MCF 10A (cell line): ENCODE measurements at regions of chr11 and their contacts with region 1.

Region 1: DNA sequence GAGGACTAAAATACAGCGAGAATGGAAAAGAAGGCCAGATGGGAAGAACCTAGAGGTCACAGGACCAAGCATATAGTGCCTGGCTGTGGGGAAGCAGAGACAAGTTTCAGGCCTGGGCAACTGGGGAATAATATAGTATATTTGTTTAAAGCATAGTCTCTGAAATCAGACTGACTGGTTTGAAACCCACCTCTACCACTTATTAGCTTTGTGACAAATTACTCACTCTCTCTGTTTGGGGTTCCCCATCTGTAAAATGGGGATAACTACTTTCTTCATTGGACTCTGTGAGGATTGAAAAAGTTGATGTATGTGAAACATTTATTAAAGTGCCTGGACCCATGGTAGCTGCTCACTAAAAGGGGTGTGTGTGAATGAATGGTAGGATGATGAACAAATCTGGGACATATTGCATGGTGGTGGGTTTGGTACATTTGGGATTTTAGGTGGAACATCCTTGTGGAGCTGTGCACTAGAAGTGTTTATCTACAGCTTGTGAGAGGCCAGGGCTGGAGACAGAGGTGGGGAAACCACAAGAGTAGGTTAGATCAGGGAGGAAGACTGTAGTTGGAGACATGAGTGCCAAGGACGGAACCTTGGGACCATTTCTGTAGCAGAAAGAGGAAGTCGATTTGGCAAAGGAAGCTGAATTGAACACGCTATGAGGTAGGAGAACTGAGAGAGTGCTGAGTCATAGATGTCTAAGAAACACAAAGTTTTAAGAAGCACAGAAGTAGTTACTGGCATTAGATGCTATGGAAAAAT is 52.6 kb downstream of the SWAP70 start:
- DNase-seq: peak; percentile 63
- H3K4me3 Mint-ChIP-seq: no peak overlapping the region
- H3K27ac Mint-ChIP-seq: peak overlapping the region; percentile 26
- H3K4me1 Mint-ChIP-seq: peaks cover 16% of the 10 kb centered on the region
- H3K27me3 Mint-ChIP-seq: no peaks in the 10 kb centered on the region
- CTCF ChIP-seq: no peak

Region 2: GRCh38 chr11:9651899-9652748 is 64.3 kb before region 1 on chr11:
- CTCF ChIA-PET with region 1: no interaction called
- POLR2A ChIA-PET with region 1: no interaction called
- intact Hi-C with region 1: no loop called
- DNase-seq: no peak
- H3K4me3 Mint-ChIP-seq: no peak overlapping the region
- H3K27ac Mint-ChIP-seq: peak overlapping the region; percentile 31
- H3K4me1 Mint-ChIP-seq: peaks cover 5% of the 10 kb centered on the region
- H3K27me3 Mint-ChIP-seq: no peaks in the 10 kb centered on the region
- CTCF ChIP-seq: no peak

Region 3: DNA sequence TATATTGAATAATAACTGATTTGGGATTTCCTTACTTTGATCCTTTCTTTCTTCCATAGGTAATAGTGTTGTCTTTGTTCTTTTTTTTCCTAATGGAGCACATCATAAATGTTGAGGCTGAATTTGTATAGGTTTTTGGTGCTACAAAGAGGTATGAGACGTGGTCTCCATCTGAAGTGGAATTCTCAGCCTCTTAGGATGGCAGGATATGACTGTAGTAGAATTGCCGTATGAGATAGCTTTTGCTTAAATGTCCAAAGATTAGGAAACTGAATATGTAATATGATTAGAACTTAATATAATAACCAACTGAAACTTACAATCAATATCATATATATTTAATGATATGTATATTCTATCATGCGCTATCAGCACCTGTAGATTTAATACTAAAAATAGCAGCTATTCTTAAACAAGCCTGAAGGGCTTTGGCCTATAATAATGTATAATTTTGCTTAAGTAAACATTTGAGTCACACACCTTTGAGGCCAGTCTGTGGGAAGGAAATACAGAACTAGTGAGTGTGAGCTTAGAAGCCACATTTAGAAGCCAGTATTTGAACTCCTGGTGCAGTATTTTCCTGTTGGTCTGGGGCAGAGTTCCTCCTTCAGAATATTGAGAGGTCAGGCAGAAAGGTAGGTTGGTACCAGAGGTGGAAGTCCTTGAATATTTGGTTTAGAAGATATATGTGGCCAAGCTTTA is 10.0 kb after region 1 on chr11:
- CTCF ChIA-PET with region 1: no interaction called
- POLR2A ChIA-PET with region 1: interaction called, 11 read pairs
- intact Hi-C with region 1: no loop called
- DNase-seq: peak; percentile 62
- H3K4me3 Mint-ChIP-seq: no peak overlapping the region
- H3K27ac Mint-ChIP-seq: peak overlapping the region; percentile 48
- H3K4me1 Mint-ChIP-seq: peaks cover 9% of the 10 kb centered on the region
- H3K27me3 Mint-ChIP-seq: no peaks in the 10 kb centered on the region
- CTCF ChIP-seq: no peak

Region 4: DNA sequence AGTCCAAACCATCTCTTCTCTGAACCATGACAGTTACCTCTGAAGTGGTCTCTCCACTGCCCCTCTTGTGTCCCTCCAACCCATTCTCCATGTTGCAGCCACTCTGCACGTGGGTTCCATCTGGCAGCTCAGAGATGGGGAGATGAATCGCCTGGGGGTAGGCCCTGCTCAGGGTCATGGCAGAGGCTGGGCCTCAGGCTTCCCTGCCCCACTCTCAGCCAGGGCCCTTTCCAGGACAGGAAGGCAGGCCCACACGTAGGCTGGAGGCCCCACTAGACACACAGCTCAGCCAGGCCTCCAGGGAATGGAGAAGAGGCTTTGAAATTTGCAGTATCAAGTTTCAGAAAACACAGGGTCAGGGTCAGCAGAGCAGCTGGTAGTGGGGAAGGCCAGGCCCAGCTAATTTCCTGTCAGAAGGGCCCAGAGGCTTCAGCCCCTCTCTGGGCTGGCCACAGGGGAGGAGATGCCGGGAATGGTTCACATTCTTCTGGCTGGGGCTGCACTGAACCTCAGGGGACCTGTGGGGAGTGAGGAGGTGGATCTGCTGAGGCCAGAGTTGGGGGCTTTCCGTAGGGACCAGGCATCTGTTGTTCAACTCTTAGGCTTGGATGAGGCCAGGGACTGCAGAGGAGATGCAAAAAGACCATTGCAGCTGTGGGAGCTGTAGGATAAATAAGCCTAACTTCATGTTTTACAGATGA is 49.0 kb after region 1 on chr11:
- CTCF ChIA-PET with region 1: no interaction called
- POLR2A ChIA-PET with region 1: no interaction called
- intact Hi-C with region 1: no loop called
- DNase-seq: no peak
- H3K4me3 Mint-ChIP-seq: no peak overlapping the region
- H3K27ac Mint-ChIP-seq: no peak overlapping the region
- H3K4me1 Mint-ChIP-seq: peaks cover 28% of the 10 kb centered on the region
- H3K27me3 Mint-ChIP-seq: no peaks in the 10 kb centered on the region
- CTCF ChIP-seq: no peak

Region 5: DNA sequence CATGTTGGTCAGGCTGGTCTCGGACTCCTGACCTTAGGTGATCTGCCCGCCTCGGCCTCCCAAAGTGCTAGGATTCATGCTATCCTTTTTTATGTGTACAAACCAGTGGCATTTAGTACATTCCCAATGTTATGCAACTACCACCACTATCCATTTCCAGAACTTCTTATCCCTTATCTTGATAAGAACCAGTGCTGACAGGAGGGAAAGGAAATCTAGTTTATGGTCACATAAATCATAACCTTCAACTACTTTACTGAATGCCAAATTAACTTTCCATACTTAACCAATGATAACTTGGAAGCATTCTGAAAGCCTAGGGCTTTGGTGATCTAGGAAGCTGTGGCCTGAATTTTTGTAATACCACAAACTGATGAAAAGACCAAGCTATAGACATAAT is 117.8 kb after region 1 on chr11:
- CTCF ChIA-PET with region 1: no interaction called
- POLR2A ChIA-PET with region 1: no interaction called
- intact Hi-C with region 1: no loop called
- DNase-seq: no peak
- H3K4me3 Mint-ChIP-seq: no peak overlapping the region
- H3K27ac Mint-ChIP-seq: no peak overlapping the region
- H3K4me1 Mint-ChIP-seq: peaks cover 13% of the 10 kb centered on the region
- H3K27me3 Mint-ChIP-seq: no peaks in the 10 kb centered on the region
- CTCF ChIP-seq: no peak